ENCODE measurements at regions of chr15 and their contacts with region 1.

Region 1: DNA sequence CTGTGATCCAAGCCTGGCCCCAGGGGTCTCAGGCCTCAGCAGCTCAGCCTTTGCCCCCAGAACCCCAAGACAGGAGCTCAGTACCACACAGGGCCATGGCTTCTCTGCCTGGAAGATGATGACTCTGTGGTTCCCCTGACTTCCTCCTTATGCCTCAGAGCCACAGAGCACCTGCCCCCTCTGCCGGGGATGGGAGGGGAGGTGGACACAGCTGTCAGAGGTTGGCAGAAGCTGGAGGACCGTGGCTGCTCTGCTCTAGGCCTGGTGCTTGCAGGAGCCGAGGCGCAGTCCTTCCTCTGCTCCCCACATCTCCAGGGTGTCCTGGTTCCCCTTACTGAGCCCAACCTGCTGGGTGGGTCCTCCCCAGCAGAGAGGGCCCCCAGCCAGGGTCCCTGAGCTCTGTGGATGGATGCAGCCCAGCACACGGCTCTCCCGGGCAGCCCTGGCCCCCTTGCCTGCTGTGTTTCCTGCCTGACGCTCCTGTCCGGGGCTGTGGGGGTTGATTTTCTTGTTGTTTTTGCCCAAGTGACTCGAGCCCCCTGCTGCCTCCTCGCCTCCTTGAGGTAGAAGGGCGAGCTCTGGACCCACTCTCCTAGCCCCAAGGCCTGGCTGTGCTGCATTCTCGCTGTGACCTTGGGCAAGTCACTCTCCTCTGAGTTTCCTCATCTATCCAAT is 36.6 kb downstream of the PSTPIP1 start:
- DNase-seq: peak in 1 of 2 donors; percentile 28
- H3K4me3 ChIP-seq: no peak overlapping the region
- H3K27ac ChIP-seq: no peak overlapping the region
- H3K4me1 ChIP-seq: no peaks in the 10 kb centered on the region
- H3K27me3 ChIP-seq: no peaks in the 10 kb centered on the region
- CTCF ChIP-seq: no peak
- POLR2A ChIP-seq: no peak

Region 2: DNA sequence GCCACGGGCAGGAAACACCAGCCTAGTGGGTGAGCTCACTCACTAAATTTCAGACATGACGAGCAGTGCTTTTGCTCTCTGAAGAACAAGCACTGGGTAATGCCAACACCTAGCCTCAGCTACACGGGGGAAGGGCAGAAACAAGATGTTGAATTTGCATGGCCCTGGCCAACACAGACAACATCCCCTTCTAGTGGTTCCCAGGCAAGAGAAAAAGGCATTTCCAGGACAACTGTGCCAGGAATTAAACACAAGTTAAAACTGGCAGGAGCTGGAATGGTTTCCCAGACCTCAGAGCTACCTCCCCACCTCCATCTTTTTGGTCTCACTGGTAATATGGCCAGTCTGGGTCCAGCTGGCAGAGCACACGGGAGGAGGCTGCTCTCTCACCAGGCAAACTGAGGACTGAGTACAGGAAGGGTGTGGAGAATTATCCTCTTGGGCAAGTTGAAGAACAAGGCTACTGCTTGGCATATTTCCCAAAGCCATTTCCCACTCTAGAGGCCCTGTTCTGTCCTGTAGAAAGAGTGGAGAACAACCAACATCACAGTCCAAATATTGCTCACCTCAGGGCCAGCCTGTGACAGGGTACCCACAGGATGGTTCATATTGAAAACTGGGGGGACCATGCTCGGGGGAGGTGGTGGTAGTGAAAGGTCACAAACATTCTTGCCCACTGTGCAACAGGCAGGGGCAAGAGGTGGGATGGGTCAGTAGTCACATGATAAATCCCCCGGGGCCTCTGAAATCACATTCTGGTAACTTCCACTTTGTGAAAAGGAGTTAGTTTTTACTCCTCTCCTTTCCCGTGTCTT is 12.9 kb after region 1 on chr15:
- intact Hi-C with region 1: no loop called
- DNase-seq: no peak
- H3K4me3 ChIP-seq: no peak overlapping the region
- H3K27ac ChIP-seq: peak overlapping the region in 1 of 2 donors; percentile 2
- H3K4me1 ChIP-seq: no peaks in the 10 kb centered on the region
- H3K27me3 ChIP-seq: no peaks in the 10 kb centered on the region
- CTCF ChIP-seq: no peak
- POLR2A ChIP-seq: no peak

Region 3: GRCh38 chr15:77059786-77060361 is 28.4 kb after region 1 on chr15:
- intact Hi-C with region 1: no loop called
- DNase-seq: no peak
- H3K4me3 ChIP-seq: no peak overlapping the region
- H3K27ac ChIP-seq: no peak overlapping the region
- H3K4me1 ChIP-seq: peaks cover 0 to 7% of the 10 kb centered on the region in 2 donors
- H3K27me3 ChIP-seq: no peaks in the 10 kb centered on the region
- CTCF ChIP-seq: no peak
- POLR2A ChIP-seq: no peak

Region 4: GRCh38 chr15:77538793-77539510 is 507.4 kb after region 1 on chr15:
- intact Hi-C with region 1: loop called (anchors 1 kb)
- DNase-seq: peak; percentile 41 to 70
- H3K4me3 ChIP-seq: no peak overlapping the region
- H3K27ac ChIP-seq: no peak overlapping the region
- H3K4me1 ChIP-seq: peaks cover 0 to 6% of the 10 kb centered on the region in 2 donors
- H3K27me3 ChIP-seq: no peaks in the 10 kb centered on the region
- CTCF ChIP-seq: no peak
- POLR2A ChIP-seq: no peak

Measured in breast epithelium (tissue), 4 donors.